Activated CD4-positive, alpha-beta memory T cell treated with anti-CD3 and anti-CD28 coated beads for 36 hours (primary cell): ENCODE measurements at regions of chr22 and their contacts with region 1.

Region 1: DNA sequence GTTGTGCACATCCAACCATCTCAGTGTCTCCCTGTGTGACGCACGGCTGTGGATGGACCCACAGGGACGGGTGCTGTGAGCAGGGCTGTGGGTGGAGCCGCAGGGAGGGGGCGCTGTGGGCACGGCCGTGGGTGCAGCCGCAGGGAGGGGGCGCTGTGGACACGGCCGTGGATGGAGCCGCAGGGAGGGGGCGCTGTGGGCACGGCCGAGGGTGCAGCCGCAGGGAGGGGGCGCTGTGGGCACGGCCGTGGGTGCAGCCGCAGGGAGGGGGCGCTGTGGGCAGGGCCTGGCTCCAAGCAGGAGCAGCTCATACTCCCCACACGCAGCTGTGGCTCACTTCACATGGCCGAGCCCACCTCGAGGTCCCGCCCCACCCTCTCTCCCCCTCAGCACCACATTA is 6.0 kb upstream of the MAPK11 start:
- DNase-seq: peak; percentile 78
- H3K4me3 Mint-ChIP-seq: no peak overlapping the region
- H3K27ac Mint-ChIP-seq: no peak overlapping the region
- H3K4me1 Mint-ChIP-seq: no peaks in the 10 kb centered on the region
- H3K27me3 Mint-ChIP-seq: no peaks in the 10 kb centered on the region

Region 2: DNA sequence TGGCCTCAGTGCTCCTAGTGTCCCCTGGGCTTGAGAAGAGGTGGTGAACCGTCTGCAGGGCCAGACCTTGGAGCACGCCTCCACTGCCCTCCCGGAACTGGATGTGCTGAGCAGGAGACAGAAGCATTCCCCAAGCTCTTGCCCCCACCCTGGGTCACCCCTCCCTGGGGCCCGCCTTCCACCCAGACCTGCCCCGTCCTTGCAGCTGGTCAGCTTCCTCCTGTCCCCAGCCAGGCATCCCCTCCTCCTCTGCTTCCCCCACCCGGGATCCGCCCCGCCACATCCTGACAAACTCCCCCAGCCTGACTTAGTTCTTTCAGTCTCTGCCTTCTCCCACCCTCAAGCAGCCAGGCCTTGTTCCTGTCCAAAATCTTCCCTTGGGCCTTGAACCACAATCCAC is 32.4 kb after region 1 on chr22:
- CTCF ChIA-PET with region 1: interaction called, 5 read pairs
- POLR2A ChIA-PET with region 1: no interaction called
- intact Hi-C with region 1: loop called (anchors 1 kb)
- DNase-seq: no peak
- H3K4me3 Mint-ChIP-seq: no peak overlapping the region
- H3K27ac Mint-ChIP-seq: no peak overlapping the region
- H3K4me1 Mint-ChIP-seq: peaks cover 6% of the 10 kb centered on the region
- H3K27me3 Mint-ChIP-seq: peaks cover 13% of the 10 kb centered on the region

Region 3: GRCh38 chr22:50376085-50376651 is 100.0 kb after region 1 on chr22:
- CTCF ChIA-PET with region 1: no interaction called
- POLR2A ChIA-PET with region 1: no interaction called
- intact Hi-C with region 1: no loop called
- DNase-seq: peak; percentile 32
- H3K4me3 Mint-ChIP-seq: no peak overlapping the region
- H3K27ac Mint-ChIP-seq: no peak overlapping the region
- H3K4me1 Mint-ChIP-seq: peaks cover 13% of the 10 kb centered on the region
- H3K27me3 Mint-ChIP-seq: no peaks in the 10 kb centered on the region